A549 (cell line): ENCODE measurements at regions of chr19 and their contacts with region 1.

Region 1: GRCh38 chr19:8580710-8581281 is 3.6 kb upstream of the MYO1F start:
- DNase-seq: peak; percentile 50 to 81
- ATAC-seq: peak; percentile 57 to 74; a peak in 5 of 6 replicates
- H3K4me3 ChIP-seq: no peak overlapping the region
- H3K27ac ChIP-seq: peak overlapping the region; percentile 29 to 75; a peak in 5 of 6 replicates
- H3K4me1 ChIP-seq: peaks cover 30% of the 10 kb centered on the region
- CTCF ChIP-seq: peak; percentile 96
- EP300 ChIP-seq: no peak
- POLR2A ChIP-seq: no peak
- RAD21 ChIP-seq: peak; percentile 84 to 87

Region 2: GRCh38 chr19:8513687-8514504 is 66.9 kb before region 1 on chr19 and contains the start of gene ZNF414:
- CTCF ChIA-PET with region 1: interaction called, 21 read pairs
- POLR2A ChIA-PET with region 1: interaction called, 18 read pairs
- DNase-seq: peak; percentile 92 to 97
- ATAC-seq: peak; percentile 95
- H3K4me3 ChIP-seq: peak within 1 kb of the TSS; percentile 51
- H3K27ac ChIP-seq: peak within 1 kb of the TSS; percentile 94 to 99
- H3K4me1 ChIP-seq: peaks cover 18% of the 10 kb centered on the region
- CTCF ChIP-seq: no peak
- EP300 ChIP-seq: no peak
- POLR2A ChIP-seq: peak; percentile 92
- RAD21 ChIP-seq: no peak
- polyA plus RNA-seq, gene ZNF414: 2.8 and 3.3 TPM in 2 replicates

Region 3: DNA sequence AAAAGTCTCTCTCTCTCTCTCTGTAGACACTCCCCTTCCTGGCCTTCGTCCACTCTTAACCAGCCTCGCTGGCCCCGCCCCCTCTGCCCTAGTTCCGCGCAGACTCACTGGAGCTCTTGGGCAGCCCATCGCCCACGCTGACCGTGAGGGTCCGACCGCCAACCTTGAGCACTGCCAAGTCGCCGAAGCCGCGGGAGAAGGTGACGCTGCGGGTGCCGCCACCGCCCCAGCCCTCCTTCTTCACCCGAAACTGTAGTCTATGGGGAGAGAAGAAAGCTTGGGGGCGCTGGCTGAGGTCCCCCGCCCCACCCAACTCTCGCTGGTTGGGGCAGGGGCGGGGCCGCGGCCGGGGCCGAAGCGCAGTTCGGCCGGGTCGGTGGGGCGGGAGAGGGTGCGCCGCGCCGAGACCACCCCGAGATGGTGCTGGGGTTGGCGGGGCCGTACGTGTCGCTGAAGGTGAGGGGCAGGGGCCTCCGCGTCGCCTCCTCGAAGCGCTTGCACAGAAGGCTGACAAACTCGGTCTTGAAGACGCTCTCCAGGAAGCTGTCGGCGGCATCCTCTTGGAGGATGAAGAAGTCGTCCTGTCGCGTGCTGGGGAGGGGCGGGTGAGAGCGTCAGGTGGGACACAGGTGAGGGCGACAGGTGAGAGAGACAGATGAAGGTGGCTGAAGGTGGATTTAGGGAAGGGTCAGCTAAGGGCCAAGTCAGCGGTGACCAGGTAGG is 54.3 kb before region 1 on chr19:
- CTCF ChIA-PET with region 1: interaction called, 17 read pairs
- POLR2A ChIA-PET with region 1: no interaction called
- DNase-seq: peak; percentile 67 to 86
- ATAC-seq: peak; percentile 83 to 86
- H3K4me3 ChIP-seq: peak overlapping the region; percentile 69
- H3K27ac ChIP-seq: peak overlapping the region; percentile 76 to 92
- H3K4me1 ChIP-seq: peaks cover 4% of the 10 kb centered on the region; the same call in 1 of the 3 replicates
- CTCF ChIP-seq: no peak
- EP300 ChIP-seq: no peak
- POLR2A ChIP-seq: peak; percentile 85
- RAD21 ChIP-seq: no peak

Region 4: DNA sequence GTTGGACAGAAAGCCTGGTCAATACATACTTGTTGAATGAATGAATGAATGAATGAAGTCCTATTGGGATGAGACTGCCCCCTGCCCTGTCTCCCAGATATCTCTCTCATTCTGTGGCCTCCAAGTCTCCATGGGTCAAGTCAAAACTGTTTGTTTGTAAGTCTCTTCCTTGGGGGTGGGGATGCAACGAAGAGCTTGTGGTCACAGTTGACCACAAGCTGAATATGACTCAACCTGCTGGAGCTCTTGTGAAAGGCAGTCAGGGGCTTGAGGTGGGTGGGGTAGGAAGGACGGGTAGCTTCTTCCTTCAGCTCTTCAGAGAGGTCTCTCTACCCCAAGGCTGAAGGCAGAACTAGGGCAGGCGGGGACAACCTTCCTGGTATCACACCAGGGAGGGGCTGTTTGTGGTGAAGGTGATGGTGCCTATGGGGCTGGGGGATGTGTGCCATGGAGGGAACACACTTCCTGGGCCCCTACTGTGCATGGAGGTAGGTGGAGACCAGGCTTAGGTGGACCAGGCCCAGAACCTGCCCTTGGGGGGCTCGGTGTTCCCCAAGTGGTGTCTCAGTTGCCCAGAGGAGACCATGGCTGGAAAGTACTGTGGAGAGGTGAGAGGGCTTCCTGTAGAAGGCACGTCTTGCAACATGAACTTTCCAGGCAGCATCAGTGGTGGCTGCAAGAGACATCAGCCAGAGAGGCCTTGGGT is 11.6 kb before region 1 on chr19:
- CTCF ChIA-PET with region 1: interaction called, 60 read pairs
- POLR2A ChIA-PET with region 1: no interaction called
- DNase-seq: peak; percentile 29 to 64
- ATAC-seq: peak in 1 of 2 experiments; percentile 45; a peak in 3 of 6 replicates
- H3K4me3 ChIP-seq: no peak overlapping the region
- H3K27ac ChIP-seq: peak overlapping the region in 1 of 2 experiments; percentile 80; a peak in 3 of 6 replicates
- H3K4me1 ChIP-seq: peaks cover 19% of the 10 kb centered on the region
- CTCF ChIP-seq: no peak
- EP300 ChIP-seq: no peak
- POLR2A ChIP-seq: no peak
- RAD21 ChIP-seq: no peak

Region 5: GRCh38 chr19:8592231-8593009 is 11.6 kb after region 1 on chr19:
- CTCF ChIA-PET with region 1: interaction called, 42 read pairs
- POLR2A ChIA-PET with region 1: no interaction called
- DNase-seq: peak; percentile 60 to 98
- ATAC-seq: peak; percentile 82 to 93
- H3K4me3 ChIP-seq: peak overlapping the region; percentile 42
- H3K27ac ChIP-seq: peak overlapping the region; percentile 80 to 95
- H3K4me1 ChIP-seq: peaks cover 25% of the 10 kb centered on the region
- CTCF ChIP-seq: no peak
- EP300 ChIP-seq: no peak
- POLR2A ChIP-seq: 0 out of 2 replicates have a peak, but pooled peaks have one; percentile 19
- RAD21 ChIP-seq: no peak

Region 6: GRCh38 chr19:8609279-8610040 is 28.7 kb after region 1 on chr19:
- CTCF ChIA-PET with region 1: interaction called, 13 read pairs
- POLR2A ChIA-PET with region 1: no interaction called
- DNase-seq: peak; percentile 44 to 91
- ATAC-seq: peak; percentile 72
- H3K4me3 ChIP-seq: peak overlapping the region; percentile 58
- H3K27ac ChIP-seq: peak overlapping the region; percentile 98 to 99
- H3K4me1 ChIP-seq: peaks cover 45% of the 10 kb centered on the region
- CTCF ChIP-seq: no peak
- EP300 ChIP-seq: no peak
- POLR2A ChIP-seq: no peak
- RAD21 ChIP-seq: peak in 1 of 2 experiments; percentile 16; a peak in 1 of 5 replicates

Region 7: DNA sequence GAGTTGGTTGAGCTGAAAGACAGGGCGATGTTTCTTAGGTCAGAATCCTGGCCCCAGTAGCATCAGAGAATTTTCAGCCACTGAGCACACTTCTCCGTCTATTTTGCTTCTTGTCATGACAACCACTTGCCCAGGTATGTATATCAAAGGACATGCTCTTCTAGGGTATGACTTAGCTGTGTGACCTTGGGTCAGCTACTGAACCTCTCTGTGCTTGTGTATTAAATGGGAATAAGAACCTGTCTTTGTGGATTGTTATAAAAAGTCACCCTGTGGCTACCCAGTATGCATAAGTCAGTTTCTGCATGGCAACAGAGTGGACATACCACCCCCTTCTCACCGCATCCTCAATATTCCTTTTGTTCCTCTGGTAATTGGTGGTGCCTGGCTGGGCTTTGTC is 277.5 kb after region 1 on chr19:
- CTCF ChIA-PET with region 1: no interaction called
- POLR2A ChIA-PET with region 1: no interaction called
- DNase-seq: no peak
- ATAC-seq: no peak
- H3K4me3 ChIP-seq: no peak overlapping the region
- H3K27ac ChIP-seq: no peak overlapping the region
- H3K4me1 ChIP-seq: no peaks in the 10 kb centered on the region
- CTCF ChIP-seq: no peak
- EP300 ChIP-seq: no peak
- POLR2A ChIP-seq: no peak
- RAD21 ChIP-seq: no peak